ENCODE measurements at regions of chr12 and their contacts with region 1.

Region 1: GRCh38 chr12:93245543-93245942 is 132.2 kb upstream of the NUDT4 start:
- DNase-seq: no peak

Region 2: GRCh38 chr12:93297032-93297431 is 51.5 kb after region 1 on chr12:
- intact Hi-C with region 1: loop called (anchors 5 kb)
- DNase-seq: no peak

Region 3: DNA sequence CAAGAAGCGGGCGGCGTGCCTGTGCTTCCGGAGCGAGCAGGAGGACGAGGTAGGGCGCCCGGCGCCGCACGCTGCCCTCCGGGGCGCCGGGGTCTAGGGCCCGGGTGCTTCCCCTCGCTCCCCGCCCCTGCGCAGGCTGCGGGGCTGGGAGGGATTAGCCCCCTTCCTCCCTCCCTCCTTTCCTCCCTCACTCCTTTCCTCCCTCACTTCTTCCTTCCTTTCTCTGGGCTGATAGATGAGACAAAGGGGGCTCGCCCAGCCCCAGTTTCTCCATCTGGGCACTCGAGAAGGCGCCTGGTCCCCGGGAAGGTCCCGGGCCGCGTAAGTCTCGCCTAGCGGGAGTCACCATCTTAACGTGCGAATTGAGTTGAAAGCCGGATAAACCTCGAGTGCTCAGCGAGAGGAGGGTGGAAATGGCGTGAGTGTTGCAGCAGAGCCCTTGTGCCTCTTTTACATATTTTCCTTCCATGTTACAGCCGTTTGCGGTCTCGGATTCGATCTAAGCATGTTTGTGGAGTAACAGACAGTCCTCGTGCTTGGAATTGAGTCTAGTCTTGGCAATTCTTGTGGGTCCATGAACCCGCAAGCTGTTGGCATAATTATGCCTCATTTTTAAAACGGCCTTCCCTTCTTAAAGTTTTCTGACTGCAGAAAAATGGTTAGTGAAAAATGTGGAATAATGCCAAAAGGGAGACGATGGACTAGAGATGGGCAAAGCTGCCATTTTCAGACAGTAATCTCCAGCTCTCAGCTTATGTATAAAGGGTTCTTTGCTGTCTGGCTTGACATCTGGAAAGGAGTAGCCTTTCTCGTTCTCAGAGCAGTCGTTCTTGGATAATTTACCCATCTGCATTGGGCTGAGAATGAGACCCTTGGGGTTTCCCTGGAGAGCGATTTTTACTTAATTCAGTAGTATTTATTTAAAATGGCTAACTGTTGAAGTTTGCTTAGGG is 133.1 kb after region 1 on chr12:
- intact Hi-C with region 1: no loop called
- DNase-seq: no peak